Sciatic nerve (tissue), 2 donors: ENCODE measurements at regions of chr12 and their contacts with region 1.

Region 1: GRCh38 chr12:19654650-19655376 is 215.5 kb downstream of the AEBP2 start:
- DNase-seq: no peak
- ATAC-seq: peak; percentile 69

Region 2: GRCh38 chr12:19719672-19720071 is 64.9 kb after region 1 on chr12:
- intact Hi-C with region 1: loop called (anchors 2 kb)
- DNase-seq: no peak
- ATAC-seq: no peak